ENCODE measurements at regions of chr1 and their contacts with region 1.

Region 1: GRCh38 chr1:147640553-147641165 is 29.7 kb downstream of the ACP6 start:
- DNase-seq: peak; percentile 64
- ATAC-seq: peak; percentile 96

Region 2: GRCh38 chr1:147264158-147264768 is 376.4 kb before region 1 on chr1:
- intact Hi-C with region 1: loop called (anchors 10 kb)
- DNase-seq: no peak
- ATAC-seq: no peak